Activated CD8-positive, alpha-beta T cell treated with anti-CD3 and anti-CD28 coated beads for 36 hours (primary cell): ENCODE measurements at regions of chr10 and their contacts with region 1.

Region 1: DNA sequence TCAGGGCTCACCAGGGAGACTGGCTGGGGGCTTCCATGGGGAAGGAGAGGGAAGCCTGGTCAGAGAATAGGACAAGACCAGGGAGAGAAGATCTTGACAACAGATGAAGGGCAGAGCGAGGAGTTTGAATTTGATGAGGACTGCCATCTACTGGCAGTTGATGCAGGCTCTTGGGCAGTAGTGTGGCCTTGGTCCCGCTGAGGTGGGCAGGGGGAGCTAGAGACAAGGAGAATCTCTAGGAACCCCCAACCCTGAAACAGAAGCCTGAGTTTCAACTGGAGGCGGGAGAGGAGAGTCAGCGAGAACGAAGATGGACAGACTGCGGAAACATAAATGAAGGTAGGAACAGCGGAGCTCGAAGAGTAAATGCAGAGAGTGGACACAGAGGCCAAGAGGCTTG is 81.0 kb downstream of the PPP1R3C start:
- DNase-seq: peak; percentile 33
- ATAC-seq: no peak
- H3K4me3 Mint-ChIP-seq: no peak overlapping the region
- H3K27ac Mint-ChIP-seq: no peak overlapping the region
- H3K4me1 Mint-ChIP-seq: no peaks in the 10 kb centered on the region
- H3K27me3 Mint-ChIP-seq: peaks cover 4% of the 10 kb centered on the region
- CTCF ChIP-seq: peak; percentile 37

Region 2: DNA sequence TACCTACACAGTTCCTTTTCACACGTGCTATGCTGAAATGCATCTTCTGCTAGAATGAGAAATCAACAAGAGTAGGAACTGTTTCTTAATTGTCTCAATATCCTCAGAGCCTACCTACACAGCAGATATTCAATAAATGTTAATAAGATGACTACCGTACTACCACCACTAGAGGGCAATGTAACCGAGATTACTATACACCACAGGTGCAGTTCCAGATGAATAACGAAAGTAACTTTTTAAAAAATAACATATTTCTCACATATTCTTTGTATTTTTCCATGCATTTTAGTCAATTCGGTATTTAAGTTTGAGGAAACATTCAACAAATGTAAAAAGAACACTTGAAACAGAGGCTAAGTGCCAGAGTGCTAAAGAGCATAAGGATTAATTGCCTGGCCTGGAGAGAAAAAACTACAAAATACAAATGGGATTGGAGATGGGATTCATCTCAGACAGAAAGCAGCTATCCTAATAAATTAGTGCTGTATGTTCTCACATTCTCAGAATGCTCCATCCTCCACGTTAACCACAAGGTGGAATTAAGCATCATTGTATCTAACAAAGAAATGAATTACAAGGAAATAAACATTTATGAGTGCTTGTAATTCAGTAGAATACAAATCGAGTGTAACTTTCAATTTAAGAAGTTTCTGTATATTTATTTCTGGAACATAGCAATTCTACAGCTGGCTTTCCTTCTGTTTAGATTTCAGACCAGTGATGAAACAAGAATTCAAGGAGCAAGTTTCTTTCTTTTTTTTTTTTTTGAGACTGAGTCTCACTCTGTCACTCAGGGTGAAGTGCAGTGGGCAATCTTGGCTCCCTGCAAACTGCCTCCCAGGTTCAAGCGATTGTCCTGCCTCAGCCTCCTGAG is 162.0 kb before region 1 on chr10:
- CTCF ChIA-PET with region 1: interaction called, 5 read pairs
- POLR2A ChIA-PET with region 1: no interaction called
- intact Hi-C with region 1: loop called (anchors 10 kb)
- DNase-seq: no peak
- ATAC-seq: peak; percentile 87
- H3K4me3 Mint-ChIP-seq: no peak overlapping the region
- H3K27ac Mint-ChIP-seq: no peak overlapping the region
- H3K4me1 Mint-ChIP-seq: peaks cover 5% of the 10 kb centered on the region
- H3K27me3 Mint-ChIP-seq: peaks cover 24% of the 10 kb centered on the region
- CTCF ChIP-seq: peak; percentile 76

Region 3: GRCh38 chr10:91420868-91421267 is 131.0 kb before region 1 on chr10:
- CTCF ChIA-PET with region 1: no interaction called
- POLR2A ChIA-PET with region 1: no interaction called
- intact Hi-C with region 1: no loop called
- DNase-seq: no peak
- ATAC-seq: peak; percentile 45
- H3K4me3 Mint-ChIP-seq: no peak overlapping the region
- H3K27ac Mint-ChIP-seq: no peak overlapping the region
- H3K4me1 Mint-ChIP-seq: peaks cover 15% of the 10 kb centered on the region
- H3K27me3 Mint-ChIP-seq: no peaks in the 10 kb centered on the region
- CTCF ChIP-seq: no peak

Region 4: DNA sequence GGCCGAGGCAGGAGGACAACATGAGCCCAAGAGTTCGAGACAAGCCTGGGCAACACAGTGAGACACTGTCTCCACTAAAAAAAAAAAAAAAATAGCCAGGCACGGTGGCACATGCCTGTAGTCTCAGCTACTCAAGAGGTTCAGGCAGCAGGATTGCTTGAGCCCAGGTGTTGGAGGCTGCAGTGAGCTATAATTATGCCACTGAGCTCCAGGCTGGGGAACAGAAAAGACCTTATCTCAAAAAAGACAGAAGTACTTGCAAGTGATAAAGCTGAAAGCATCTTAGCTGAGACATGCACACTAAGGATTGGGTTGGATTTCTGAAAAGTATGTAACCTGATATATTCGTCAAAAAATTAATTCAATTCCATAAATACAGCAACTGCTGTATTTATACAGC is 12.7 kb after region 1 on chr10:
- CTCF ChIA-PET with region 1: no interaction called
- POLR2A ChIA-PET with region 1: no interaction called
- intact Hi-C with region 1: no loop called
- DNase-seq: no peak
- ATAC-seq: no peak
- H3K4me3 Mint-ChIP-seq: no peak overlapping the region
- H3K27ac Mint-ChIP-seq: no peak overlapping the region
- H3K4me1 Mint-ChIP-seq: no peaks in the 10 kb centered on the region
- H3K27me3 Mint-ChIP-seq: peaks cover 20% of the 10 kb centered on the region
- CTCF ChIP-seq: no peak

Region 5: DNA sequence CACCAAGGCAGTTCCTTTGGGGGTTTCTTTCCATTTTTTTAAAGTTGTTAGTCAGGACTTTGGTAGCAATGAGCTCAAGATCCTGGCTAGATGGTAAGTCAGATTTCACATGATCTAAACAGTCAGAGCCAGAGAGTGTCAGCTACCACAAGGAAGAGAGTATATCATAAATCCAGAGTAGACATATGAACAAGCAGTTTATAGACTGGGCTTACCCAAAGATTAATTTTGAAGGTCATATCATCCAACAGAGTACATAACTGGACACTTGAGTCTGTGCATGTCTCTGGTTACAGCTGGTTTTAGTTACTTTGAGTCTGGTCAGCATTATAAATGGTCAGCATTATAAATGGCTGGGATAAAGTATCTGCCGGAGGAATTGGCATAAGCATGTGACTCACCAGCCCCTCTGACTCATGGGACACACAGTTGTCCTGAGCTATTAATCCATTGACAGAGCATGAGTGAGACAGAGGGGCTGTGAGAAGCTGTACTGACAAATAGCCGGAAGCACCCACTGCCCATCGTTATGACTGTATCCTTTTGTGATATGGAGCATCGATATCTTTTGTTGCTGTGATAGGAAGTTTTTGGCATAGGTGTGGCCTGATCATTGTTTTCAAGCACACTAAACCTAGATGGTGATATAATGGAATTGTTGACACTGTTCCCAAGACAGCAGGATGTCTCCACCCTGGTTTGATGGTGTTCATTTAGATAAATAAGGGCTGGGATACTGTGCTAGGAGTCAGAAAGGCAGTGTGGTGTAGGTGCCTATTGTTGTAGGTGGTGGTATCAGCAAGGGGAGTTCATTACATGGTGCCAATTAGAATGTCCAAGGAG is 61.8 kb after region 1 on chr10:
- CTCF ChIA-PET with region 1: no interaction called
- POLR2A ChIA-PET with region 1: no interaction called
- intact Hi-C with region 1: no loop called
- DNase-seq: no peak
- ATAC-seq: no peak
- H3K4me3 Mint-ChIP-seq: no peak overlapping the region
- H3K27ac Mint-ChIP-seq: no peak overlapping the region
- H3K4me1 Mint-ChIP-seq: no peaks in the 10 kb centered on the region
- H3K27me3 Mint-ChIP-seq: peaks cover 7% of the 10 kb centered on the region
- CTCF ChIP-seq: no peak

Region 6: GRCh38 chr10:91711885-91712680 is 160.2 kb after region 1 on chr10:
- CTCF ChIA-PET with region 1: no interaction called
- POLR2A ChIA-PET with region 1: no interaction called
- intact Hi-C with region 1: no loop called
- DNase-seq: no peak
- ATAC-seq: no peak
- H3K4me3 Mint-ChIP-seq: no peak overlapping the region
- H3K27ac Mint-ChIP-seq: no peak overlapping the region
- H3K4me1 Mint-ChIP-seq: no peaks in the 10 kb centered on the region
- H3K27me3 Mint-ChIP-seq: peaks cover 13% of the 10 kb centered on the region
- CTCF ChIP-seq: no peak